H1 (cell line): ENCODE measurements at regions of chr1 and their contacts with region 1.

Region 1: GRCh38 chr1:224851210-224851847 is 78.1 kb upstream of the DNAH14 start:
- DNase-seq: peak in 1 of 2 experiments; percentile 91
- H3K4me3 ChIP-seq: no peak overlapping the region
- H3K27ac ChIP-seq: no peak overlapping the region
- H3K4me1 ChIP-seq: peaks cover 3 to 8% (median 5%) of the 10 kb centered on the region in 4 experiments
- H3K27me3 ChIP-seq: no peaks in the 10 kb centered on the region
- CTCF ChIP-seq: peak; percentile 81 to 93 (median 87)
- EP300 ChIP-seq: no peak
- POLR2A ChIP-seq: no peak
- RAD21 ChIP-seq: peak; percentile 80 to 83

Region 2: DNA sequence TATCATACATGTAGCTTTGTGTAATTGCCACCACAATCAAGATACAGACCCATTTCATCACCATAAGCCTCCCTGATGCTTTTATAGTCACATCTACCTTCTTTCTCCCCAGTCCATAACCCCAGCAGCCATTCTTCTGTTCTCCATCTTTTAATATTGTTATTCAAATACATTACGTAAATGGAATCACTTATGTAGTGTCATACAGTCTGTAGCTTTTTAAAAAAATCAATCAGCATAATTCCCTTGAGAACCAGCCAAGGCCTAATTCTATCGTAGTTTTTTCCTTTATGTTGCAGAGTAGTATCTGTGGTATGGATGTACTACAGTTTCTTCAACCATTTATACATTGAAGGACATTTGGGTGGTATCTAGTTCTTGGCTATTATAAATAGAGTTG is 385.2 kb before region 1 on chr1:
- CTCF ChIA-PET with region 1: no interaction called
- POLR2A ChIA-PET with region 1: no interaction called
- DNase-seq: no peak
- H3K4me3 ChIP-seq: no peak overlapping the region
- H3K27ac ChIP-seq: no peak overlapping the region
- H3K4me1 ChIP-seq: no peaks in the 10 kb centered on the region
- H3K27me3 ChIP-seq: no peaks in the 10 kb centered on the region
- CTCF ChIP-seq: no peak
- EP300 ChIP-seq: no peak
- POLR2A ChIP-seq: no peak
- RAD21 ChIP-seq: no peak

Region 3: GRCh38 chr1:224519874-224520273 is 331.5 kb before region 1 on chr1:
- CTCF ChIA-PET with region 1: interaction called, 103 read pairs
- POLR2A ChIA-PET with region 1: no interaction called
- DNase-seq: no peak
- H3K4me3 ChIP-seq: no peak overlapping the region
- H3K27ac ChIP-seq: no peak overlapping the region
- H3K4me1 ChIP-seq: no peaks in the 10 kb centered on the region
- H3K27me3 ChIP-seq: no peaks in the 10 kb centered on the region
- CTCF ChIP-seq: no peak
- EP300 ChIP-seq: no peak
- POLR2A ChIP-seq: no peak
- RAD21 ChIP-seq: no peak

Region 4: GRCh38 chr1:224609333-224609732 is 242.0 kb before region 1 on chr1:
- CTCF ChIA-PET with region 1: no interaction called
- POLR2A ChIA-PET with region 1: no interaction called
- DNase-seq: no peak
- H3K4me3 ChIP-seq: no peak overlapping the region
- H3K27ac ChIP-seq: no peak overlapping the region
- H3K4me1 ChIP-seq: peaks cover 2 to 15% (median 12%) of the 10 kb centered on the region in 4 experiments; a peak in 6 of 7 replicates
- H3K27me3 ChIP-seq: peaks cover 0 to 7% (median 6%) of the 10 kb centered on the region in 4 experiments; a peak in 6 of 7 replicates
- CTCF ChIP-seq: no peak
- EP300 ChIP-seq: no peak
- POLR2A ChIP-seq: no peak
- RAD21 ChIP-seq: no peak

Region 5: DNA sequence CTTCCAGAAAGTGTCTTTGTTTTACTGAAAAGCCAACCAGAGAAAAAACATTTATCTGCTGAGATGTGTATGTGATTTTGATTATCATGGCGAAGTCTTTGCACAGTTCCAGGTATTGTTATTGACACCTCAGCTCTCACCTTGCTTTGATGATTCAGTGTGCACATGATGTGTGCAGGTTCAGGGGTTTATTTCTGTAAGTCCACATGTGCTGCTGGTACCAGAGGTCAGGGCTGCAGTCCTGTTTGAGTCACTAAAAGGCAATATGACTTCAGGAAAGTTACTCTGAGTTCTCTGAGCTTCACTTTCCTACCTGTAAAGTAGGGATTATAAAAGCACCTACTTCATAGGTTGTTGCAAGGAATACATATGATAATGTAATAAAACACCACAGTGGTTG is 138.1 kb before region 1 on chr1:
- CTCF ChIA-PET with region 1: interaction called, 236 read pairs
- POLR2A ChIA-PET with region 1: no interaction called
- DNase-seq: no peak
- H3K4me3 ChIP-seq: no peak overlapping the region
- H3K27ac ChIP-seq: no peak overlapping the region
- H3K4me1 ChIP-seq: no peaks in the 10 kb centered on the region
- H3K27me3 ChIP-seq: no peaks in the 10 kb centered on the region
- CTCF ChIP-seq: no peak
- EP300 ChIP-seq: no peak
- POLR2A ChIP-seq: no peak
- RAD21 ChIP-seq: no peak

Region 6: GRCh38 chr1:224804220-224804619 is 47.1 kb before region 1 on chr1:
- CTCF ChIA-PET with region 1: interaction called, 21 read pairs
- POLR2A ChIA-PET with region 1: interaction called, 3 read pairs
- DNase-seq: no peak
- H3K4me3 ChIP-seq: no peak overlapping the region
- H3K27ac ChIP-seq: no peak overlapping the region; the same call in 1 of the 2 replicates
- H3K4me1 ChIP-seq: peaks cover 0 to 13% (median 10%) of the 10 kb centered on the region in 4 experiments; a peak in 5 of 7 replicates
- H3K27me3 ChIP-seq: no peaks in the 10 kb centered on the region
- CTCF ChIP-seq: no peak
- EP300 ChIP-seq: no peak
- POLR2A ChIP-seq: no peak
- RAD21 ChIP-seq: no peak

Region 7: GRCh38 chr1:224863970-224864369 is 12.6 kb after region 1 on chr1:
- CTCF ChIA-PET with region 1: interaction called, 51 read pairs
- POLR2A ChIA-PET with region 1: no interaction called
- DNase-seq: no peak
- H3K4me3 ChIP-seq: no peak overlapping the region
- H3K27ac ChIP-seq: no peak overlapping the region
- H3K4me1 ChIP-seq: no peaks in the 10 kb centered on the region
- H3K27me3 ChIP-seq: no peaks in the 10 kb centered on the region
- CTCF ChIP-seq: no peak
- EP300 ChIP-seq: no peak
- POLR2A ChIP-seq: no peak
- RAD21 ChIP-seq: no peak

Region 8: GRCh38 chr1:224894918-224895317 is 43.6 kb after region 1 on chr1:
- CTCF ChIA-PET with region 1: interaction called, 65 read pairs
- POLR2A ChIA-PET with region 1: interaction called, 3 read pairs
- DNase-seq: no peak
- H3K4me3 ChIP-seq: no peak overlapping the region
- H3K27ac ChIP-seq: no peak overlapping the region
- H3K4me1 ChIP-seq: no peaks in the 10 kb centered on the region
- H3K27me3 ChIP-seq: no peaks in the 10 kb centered on the region
- CTCF ChIP-seq: peak in 2 of 3 experiments; percentile 60 to 62; a peak in 3 of 4 replicates
- EP300 ChIP-seq: no peak
- POLR2A ChIP-seq: no peak
- RAD21 ChIP-seq: peak; percentile 78 to 80

Region 9: GRCh38 chr1:224980181-224980580 is 128.9 kb after region 1 on chr1:
- CTCF ChIA-PET with region 1: no interaction called
- POLR2A ChIA-PET with region 1: no interaction called
- DNase-seq: no peak
- H3K4me3 ChIP-seq: no peak overlapping the region
- H3K27ac ChIP-seq: no peak overlapping the region
- H3K4me1 ChIP-seq: no peaks in the 10 kb centered on the region
- H3K27me3 ChIP-seq: peaks cover 21 to 42% (median 26%) of the 10 kb centered on the region in 4 experiments
- CTCF ChIP-seq: no peak
- EP300 ChIP-seq: no peak
- POLR2A ChIP-seq: no peak
- RAD21 ChIP-seq: no peak

Region 10: DNA sequence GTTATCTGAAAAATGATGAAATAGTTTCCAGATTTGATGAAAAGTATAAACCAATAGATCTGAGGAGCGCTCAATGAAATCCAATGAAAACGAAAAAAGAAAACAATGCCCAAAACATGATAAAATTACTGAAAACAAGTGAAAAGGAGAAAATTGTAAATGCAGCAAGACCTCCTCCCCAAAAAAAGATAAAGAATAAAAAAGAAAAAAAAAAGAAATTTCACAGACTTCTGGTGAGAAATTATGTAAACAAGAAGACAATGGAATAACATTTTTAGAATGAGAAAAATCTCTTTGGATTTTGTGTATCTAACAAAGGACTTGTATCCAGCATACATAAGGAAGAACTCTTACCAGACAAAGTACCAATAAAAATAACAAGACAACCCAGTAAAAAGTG is 212.4 kb after region 1 on chr1:
- CTCF ChIA-PET with region 1: no interaction called
- POLR2A ChIA-PET with region 1: no interaction called
- DNase-seq: no peak
- H3K4me3 ChIP-seq: no peak overlapping the region
- H3K27ac ChIP-seq: no peak overlapping the region
- H3K4me1 ChIP-seq: no peaks in the 10 kb centered on the region
- H3K27me3 ChIP-seq: no peaks in the 10 kb centered on the region
- CTCF ChIP-seq: no peak
- EP300 ChIP-seq: no peak
- POLR2A ChIP-seq: no peak
- RAD21 ChIP-seq: no peak